ENCODE measurements at regions of chr2 and their contacts with region 1.

Region 1: DNA sequence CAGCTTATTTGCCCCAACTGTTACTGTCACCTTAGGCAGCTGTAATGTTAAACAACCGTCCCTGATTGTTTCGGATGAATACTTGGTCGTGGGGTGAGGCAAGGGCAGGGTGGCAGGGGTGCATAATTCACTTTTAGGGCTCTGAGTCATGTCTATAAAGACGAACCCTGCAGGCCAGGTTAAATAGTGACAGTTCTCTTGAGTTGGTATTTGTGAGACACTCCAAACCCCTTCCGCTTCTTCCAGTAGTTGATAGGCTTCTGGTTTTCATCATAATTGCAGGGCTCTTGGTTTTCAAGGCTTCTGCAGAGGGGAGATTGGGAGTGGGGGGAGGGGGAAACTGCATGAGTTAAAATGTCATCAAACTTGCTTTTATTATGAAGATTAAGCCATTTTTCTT is 97.2 kb upstream of the TSPYL6 start:
- DNase-seq: no peak
- H3K4me3 ChIP-seq: no peak overlapping the region
- H3K27ac ChIP-seq: no peak overlapping the region
- H3K4me1 ChIP-seq: no peaks in the 10 kb centered on the region
- H3K27me3 ChIP-seq: no peaks in the 10 kb centered on the region
- CTCF ChIP-seq: no peak
- POLR2A ChIP-seq: no peak

Region 2: DNA sequence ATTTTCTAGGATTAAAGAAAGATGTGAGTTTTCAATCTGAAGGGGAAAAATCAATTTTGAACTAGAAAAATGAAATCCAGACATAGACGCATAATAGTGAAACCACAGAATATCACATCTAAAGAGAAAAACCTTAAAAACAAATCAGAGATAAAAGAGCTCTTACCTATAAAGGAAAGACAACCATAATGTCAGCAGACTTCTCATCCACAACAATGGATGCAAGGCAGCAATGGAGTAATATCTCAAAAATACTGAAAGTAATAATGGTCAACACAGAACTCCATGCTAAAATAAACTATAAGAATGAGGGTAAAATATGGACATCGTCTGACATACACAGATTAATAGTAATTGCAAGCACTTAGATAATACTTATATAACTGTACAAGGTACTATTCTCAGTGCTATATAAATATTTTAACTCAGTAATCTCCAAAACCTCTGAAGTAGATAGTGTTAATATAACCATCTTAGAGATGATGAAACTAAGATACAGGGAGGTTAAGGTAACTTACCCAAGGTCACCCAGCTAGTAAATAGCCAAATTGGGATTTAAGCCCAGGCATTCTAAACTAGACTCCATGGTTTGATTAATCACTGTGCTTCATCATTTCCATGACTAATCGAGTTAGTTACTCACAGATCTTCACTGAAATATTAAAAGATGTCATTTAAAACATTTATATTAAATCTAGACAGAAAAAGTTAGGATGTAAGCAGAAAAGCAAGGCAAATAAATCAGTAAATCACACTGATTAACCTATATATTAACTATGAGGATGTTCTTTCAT is 13.5 kb after region 1 on chr2:
- intact Hi-C with region 1: loop called (anchors 2 kb)
- DNase-seq: no peak
- H3K4me3 ChIP-seq: no peak overlapping the region
- H3K27ac ChIP-seq: no peak overlapping the region
- H3K4me1 ChIP-seq: no peaks in the 10 kb centered on the region
- H3K27me3 ChIP-seq: no peaks in the 10 kb centered on the region
- CTCF ChIP-seq: no peak
- POLR2A ChIP-seq: no peak

Measured in breast epithelium (tissue), 4 donors.